Naive thymus-derived CD4-positive, alpha-beta T cell (primary cell): ENCODE measurements at regions of chr12 and their contacts with region 1.

Region 1: DNA sequence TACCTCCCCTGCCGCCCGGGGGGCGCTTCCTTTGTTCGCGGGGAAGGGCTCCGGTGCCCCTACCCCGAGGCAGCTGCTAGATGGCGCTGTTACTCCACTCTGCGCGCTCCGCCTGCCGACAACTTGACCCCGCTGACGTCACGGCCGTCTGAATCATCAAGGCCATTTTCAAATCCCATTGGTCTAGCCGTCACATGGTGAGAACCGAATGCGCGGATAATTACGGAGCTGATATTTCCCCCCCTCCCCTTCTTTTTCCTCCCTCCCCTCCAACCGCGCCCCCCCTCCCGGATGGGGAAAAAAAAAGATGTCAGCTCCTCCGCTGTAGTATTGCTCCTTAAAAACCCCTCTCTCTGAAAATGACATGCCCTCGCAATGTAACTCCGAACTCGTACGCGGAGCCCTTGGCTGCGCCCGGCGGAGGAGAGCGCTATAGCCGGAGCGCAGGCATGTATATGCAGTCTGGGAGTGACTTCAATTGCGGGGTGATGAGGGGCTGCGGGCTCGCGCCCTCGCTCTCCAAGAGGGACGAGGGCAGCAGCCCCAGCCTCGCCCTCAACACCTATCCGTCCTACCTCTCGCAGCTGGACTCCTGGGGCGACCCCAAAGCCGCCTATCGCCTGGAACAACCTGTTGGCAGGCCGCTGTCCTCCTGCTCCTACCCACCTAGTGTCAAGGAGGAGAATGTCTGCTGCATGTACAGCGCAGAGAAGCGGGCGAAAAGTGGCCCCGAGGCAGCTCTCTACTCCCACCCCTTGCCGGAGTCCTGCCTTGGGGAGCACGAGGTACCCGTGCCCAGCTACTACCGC is at the start of gene HOXC10:
- DNase-seq: peak in 4 of 9 donors; percentile 45 to 67 (median 55)
- ATAC-seq: peak; percentile 77
- H3K4me3 ChIP-seq: no peak within 1 kb of the TSS
- H3K4me3 Mint-ChIP-seq: peak within 1 kb of the TSS; percentile 34 to 77 (median 65)
- H3K27ac ChIP-seq: no peak within 1 kb of the TSS
- H3K27ac Mint-ChIP-seq: peak within 1 kb of the TSS in 6 of 9 donors; percentile 34 to 81 (median 65)
- H3K4me1 ChIP-seq: peaks cover 20 to 23% of the 10 kb centered on the region in 2 donors
- H3K4me1 Mint-ChIP-seq: peaks cover 27 to 55% (median 39%) of the 10 kb centered on the region in 7 donors
- H3K27me3 ChIP-seq: peaks cover 60 to 89% of the 10 kb centered on the region in 2 donors
- H3K27me3 Mint-ChIP-seq: peaks cover 91 to 95% (median 92%) of the 10 kb centered on the region in 5 donors
- total RNA-seq, gene HOXC10: not detected

Region 2: GRCh38 chr12:53791735-53792326 is 193.3 kb before region 1 on chr12:
- CTCF ChIA-PET with region 1: no interaction called
- POLR2A ChIA-PET with region 1: no interaction called
- intact Hi-C with region 1: loop called in 1 of 2 experiments (anchors 2 kb)
- DNase-seq: peak in 5 of 9 donors; percentile 1 to 23 (median 14)
- ATAC-seq: no peak
- H3K4me3 ChIP-seq: no peak overlapping the region
- H3K4me3 Mint-ChIP-seq: no peak overlapping the region
- H3K27ac ChIP-seq: no peak overlapping the region
- H3K27ac Mint-ChIP-seq: no peak overlapping the region
- H3K4me1 ChIP-seq: no peaks in the 10 kb centered on the region
- H3K4me1 Mint-ChIP-seq: no peaks in the 10 kb centered on the region
- H3K27me3 ChIP-seq: peaks cover 0 to 2% of the 10 kb centered on the region in 2 donors
- H3K27me3 Mint-ChIP-seq: peaks cover 18 to 35% (median 24%) of the 10 kb centered on the region in 5 donors

Region 3: GRCh38 chr12:53938326-53939140 is 46.6 kb before region 1 on chr12 and contains the start of gene HOXC13:
- CTCF ChIA-PET with region 1: no interaction called
- POLR2A ChIA-PET with region 1: no interaction called
- intact Hi-C with region 1: loop called in 1 of 2 experiments (anchors 5 kb)
- DNase-seq: peak in 1 of 9 donors; percentile 21
- ATAC-seq: no peak
- H3K4me3 ChIP-seq: no peak within 1 kb of the TSS
- H3K4me3 Mint-ChIP-seq: peak within 1 kb of the TSS in 8 of 10 donors; percentile 22 to 63 (median 42)
- H3K27ac ChIP-seq: no peak within 1 kb of the TSS
- H3K27ac Mint-ChIP-seq: peak within 1 kb of the TSS in 2 of 9 donors; percentile 13 to 46
- H3K4me1 ChIP-seq: peaks cover 0 to 3% of the 10 kb centered on the region in 2 donors
- H3K4me1 Mint-ChIP-seq: peaks cover 0 to 35% (median 23%) of the 10 kb centered on the region in 7 donors
- H3K27me3 ChIP-seq: peaks cover 18 to 42% of the 10 kb centered on the region in 2 donors
- H3K27me3 Mint-ChIP-seq: peaks cover 84 to 95% (median 90%) of the 10 kb centered on the region in 5 donors
- total RNA-seq, gene HOXC13: not detected

Region 4: GRCh38 chr12:53952871-53953734 is 32.0 kb before region 1 on chr12:
- CTCF ChIA-PET with region 1: no interaction called
- POLR2A ChIA-PET with region 1: no interaction called
- intact Hi-C with region 1: loop called in 1 of 2 experiments (anchors 5 kb)
- DNase-seq: no peak
- ATAC-seq: no peak
- H3K4me3 ChIP-seq: no peak overlapping the region
- H3K4me3 Mint-ChIP-seq: peak overlapping the region in 7 of 10 donors; percentile 3 to 59 (median 38)
- H3K27ac ChIP-seq: no peak overlapping the region
- H3K27ac Mint-ChIP-seq: peak overlapping the region in 7 of 9 donors; percentile 23 to 88 (median 75)
- H3K4me1 ChIP-seq: peaks cover 4 to 15% of the 10 kb centered on the region in 2 donors
- H3K4me1 Mint-ChIP-seq: peaks cover 9 to 57% (median 26%) of the 10 kb centered on the region in 7 donors
- H3K27me3 ChIP-seq: peaks cover 34 to 69% of the 10 kb centered on the region in 2 donors
- H3K27me3 Mint-ChIP-seq: peaks cover 76 to 96% (median 90%) of the 10 kb centered on the region in 5 donors